ENCODE measurements at regions of chr1 and their contacts with region 1.

Region 1: DNA sequence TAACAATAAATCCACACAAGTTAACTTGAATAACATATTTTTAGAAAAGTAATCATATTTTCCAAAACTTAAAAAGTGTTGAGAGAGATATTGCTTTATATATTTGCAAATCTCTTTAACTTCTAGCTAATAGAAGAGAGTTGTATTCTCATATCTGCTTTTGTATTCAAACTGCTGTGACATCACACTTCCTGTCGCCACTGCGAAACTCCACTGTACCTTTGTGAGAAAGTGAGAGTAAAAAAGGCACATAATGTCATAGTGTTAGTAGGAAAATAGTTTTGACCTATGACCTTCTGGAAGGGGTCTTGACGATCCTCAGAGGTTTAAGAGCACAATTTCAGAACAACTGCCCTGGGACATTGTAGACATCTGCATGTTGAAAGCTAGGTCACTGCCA is 21.6 kb downstream of the AK5 start:
- DNase-seq: no peak
- H3K4me3 ChIP-seq: no peak overlapping the region
- H3K27ac ChIP-seq: no peak overlapping the region
- H3K4me1 ChIP-seq: peaks cover 0 to under 1% (median 0%) of the 10 kb centered on the region in 4 experiments
- H3K27me3 ChIP-seq: no peaks in the 10 kb centered on the region

Region 2: GRCh38 chr1:77267035-77267434 is 36.4 kb before region 1 on chr1:
- CTCF ChIA-PET with region 1: no interaction called
- POLR2A ChIA-PET with region 1: no interaction called
- DNase-seq: no peak
- H3K4me3 ChIP-seq: no peak overlapping the region
- H3K27ac ChIP-seq: no peak overlapping the region
- H3K4me1 ChIP-seq: peaks cover 0 to 4% (median 0%) of the 10 kb centered on the region in 4 experiments
- H3K27me3 ChIP-seq: no peaks in the 10 kb centered on the region

Region 3: GRCh38 chr1:77313491-77313890 is 10.1 kb after region 1 on chr1:
- CTCF ChIA-PET with region 1: interaction called, 14 read pairs
- POLR2A ChIA-PET with region 1: no interaction called
- DNase-seq: peak; percentile 12 to 62 (median 62)
- H3K4me3 ChIP-seq: peak overlapping the region in 1 of 7 experiments; percentile 43
- H3K27ac ChIP-seq: no peak overlapping the region
- H3K4me1 ChIP-seq: peaks cover 0 to 11% (median 5%) of the 10 kb centered on the region in 4 experiments
- H3K27me3 ChIP-seq: no peaks in the 10 kb centered on the region

Region 4: DNA sequence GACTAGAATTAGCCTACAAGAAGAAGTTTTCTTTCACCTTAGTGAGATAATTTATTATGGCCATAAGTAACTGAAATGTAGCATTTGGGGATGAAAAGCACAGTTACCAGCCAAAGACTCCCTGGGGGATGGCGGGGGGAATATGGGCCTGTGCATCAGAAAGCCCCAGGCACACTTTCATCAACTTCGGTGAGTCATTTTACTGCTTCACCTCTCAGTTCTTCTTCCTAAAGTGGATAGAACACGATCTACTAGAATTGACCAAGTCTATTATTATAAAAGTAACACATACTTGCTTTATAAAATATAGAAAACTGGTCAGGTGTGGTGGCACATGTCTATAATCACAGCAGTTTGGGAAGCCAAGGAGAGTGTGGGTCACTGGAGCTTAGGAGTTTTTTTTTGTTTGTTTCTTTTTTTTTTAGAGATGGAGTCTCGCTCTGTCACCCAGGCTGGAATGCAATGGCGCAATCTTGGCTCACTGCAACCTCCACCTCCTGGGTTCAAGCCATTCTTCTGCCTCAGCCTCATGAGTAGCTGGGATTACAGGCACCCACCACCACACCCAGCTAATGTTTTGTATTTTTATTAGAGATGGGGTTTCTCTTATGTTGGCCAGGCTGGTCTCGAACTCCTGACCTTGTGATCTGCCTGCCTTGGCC is 237.2 kb after region 1 on chr1:
- CTCF ChIA-PET with region 1: no interaction called
- POLR2A ChIA-PET with region 1: no interaction called
- DNase-seq: no peak
- H3K4me3 ChIP-seq: no peak overlapping the region
- H3K27ac ChIP-seq: no peak overlapping the region
- H3K4me1 ChIP-seq: peaks cover 0 to 23% (median 15%) of the 10 kb centered on the region in 4 experiments
- H3K27me3 ChIP-seq: no peaks in the 10 kb centered on the region

Measured in common myeloid progenitor, CD34-positive (primary cell).